ENCODE measurements at regions of chr4 and their contacts with region 1.

Region 1: GRCh38 chr4:22045051-22045630 is 96.6 kb upstream of the KCNIP4 start:
- DNase-seq: no peak
- H3K4me3 ChIP-seq: no peak overlapping the region
- H3K27ac ChIP-seq: no peak overlapping the region
- H3K4me1 ChIP-seq: no peaks in the 10 kb centered on the region
- H3K27me3 ChIP-seq: no peaks in the 10 kb centered on the region
- CTCF ChIP-seq: no peak
- EP300 ChIP-seq: no peak
- POLR2A ChIP-seq: no peak

Region 2: DNA sequence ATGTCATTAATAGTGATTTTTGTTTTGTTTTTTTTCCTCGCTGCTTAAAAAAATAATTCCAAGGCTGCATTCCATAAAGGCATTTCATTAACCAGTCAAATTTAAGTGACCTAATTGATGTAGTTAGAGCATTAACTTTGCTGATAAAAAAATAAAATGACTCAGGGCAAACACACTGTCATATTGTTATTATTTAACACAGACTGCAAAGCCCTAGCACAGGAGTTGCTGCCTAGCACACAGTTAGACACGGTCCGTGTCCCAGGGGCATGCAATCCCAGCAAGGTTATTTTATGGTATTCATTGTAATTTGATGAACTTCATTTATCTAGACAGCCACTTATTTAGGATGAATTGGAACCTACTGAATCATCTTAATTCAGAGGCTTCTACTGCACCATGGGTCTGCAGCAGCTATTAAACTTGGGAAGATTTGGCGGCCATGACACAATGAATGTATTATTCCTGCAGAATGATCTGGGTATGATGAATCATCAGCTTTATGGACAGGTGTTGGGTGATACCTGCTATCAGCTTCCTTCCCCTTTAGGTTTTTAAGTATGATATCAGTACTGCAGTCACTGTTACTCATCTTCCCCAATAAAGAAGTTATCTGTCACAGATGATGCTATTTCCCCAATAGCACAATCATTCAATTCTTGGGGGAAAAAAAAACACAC is 1662.0 kb after region 1 on chr4:
- in situ Hi-C with region 1: no loop called
- intact Hi-C with region 1: loop called (anchors 10 kb)
- DNase-seq: no peak
- H3K4me3 ChIP-seq: no peak overlapping the region
- H3K27ac ChIP-seq: no peak overlapping the region
- H3K4me1 ChIP-seq: no peaks in the 10 kb centered on the region
- H3K27me3 ChIP-seq: no peaks in the 10 kb centered on the region
- CTCF ChIP-seq: no peak
- EP300 ChIP-seq: no peak
- POLR2A ChIP-seq: no peak

Measured in transverse colon (tissue), 4 donors.